GM12878 (cell line): ENCODE measurements at regions of chr5 and their contacts with region 1.

Region 1: DNA sequence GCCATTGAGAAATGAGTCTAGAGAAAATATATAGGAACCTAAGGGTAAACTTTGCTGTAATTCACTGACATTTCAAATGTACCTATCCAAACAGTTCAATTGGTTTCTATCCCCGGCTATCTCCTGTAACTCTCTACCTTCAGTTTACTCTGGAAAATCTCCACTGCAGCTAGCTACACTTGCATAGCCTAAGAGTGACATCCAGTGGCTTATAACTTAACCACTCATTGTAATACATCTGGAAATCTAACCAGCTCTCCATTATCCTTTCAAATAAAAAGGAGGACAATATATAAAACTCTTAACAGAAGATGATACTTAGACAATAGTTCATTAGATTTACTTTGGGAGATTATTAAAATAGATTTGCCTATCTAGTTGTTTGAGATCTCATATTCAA is 35.3 kb upstream of the SPDL1 start:
- DNase-seq: no peak
- ATAC-seq: peak; percentile 47
- H3K4me3 ChIP-seq: no peak overlapping the region
- H3K27ac ChIP-seq: no peak overlapping the region
- H3K4me1 ChIP-seq: no peaks in the 10 kb centered on the region
- H3K27me3 ChIP-seq: peaks cover 1 to 3% of the 10 kb centered on the region in 2 experiments; a peak in 1 of 4 replicates
- CTCF ChIP-seq: peak in 1 of 3 experiments; percentile 46; a peak in 1 of 6 replicates
- EP300 ChIP-seq: no peak
- POLR2A ChIP-seq: no peak
- RAD21 ChIP-seq: peak; percentile 66

Region 2: DNA sequence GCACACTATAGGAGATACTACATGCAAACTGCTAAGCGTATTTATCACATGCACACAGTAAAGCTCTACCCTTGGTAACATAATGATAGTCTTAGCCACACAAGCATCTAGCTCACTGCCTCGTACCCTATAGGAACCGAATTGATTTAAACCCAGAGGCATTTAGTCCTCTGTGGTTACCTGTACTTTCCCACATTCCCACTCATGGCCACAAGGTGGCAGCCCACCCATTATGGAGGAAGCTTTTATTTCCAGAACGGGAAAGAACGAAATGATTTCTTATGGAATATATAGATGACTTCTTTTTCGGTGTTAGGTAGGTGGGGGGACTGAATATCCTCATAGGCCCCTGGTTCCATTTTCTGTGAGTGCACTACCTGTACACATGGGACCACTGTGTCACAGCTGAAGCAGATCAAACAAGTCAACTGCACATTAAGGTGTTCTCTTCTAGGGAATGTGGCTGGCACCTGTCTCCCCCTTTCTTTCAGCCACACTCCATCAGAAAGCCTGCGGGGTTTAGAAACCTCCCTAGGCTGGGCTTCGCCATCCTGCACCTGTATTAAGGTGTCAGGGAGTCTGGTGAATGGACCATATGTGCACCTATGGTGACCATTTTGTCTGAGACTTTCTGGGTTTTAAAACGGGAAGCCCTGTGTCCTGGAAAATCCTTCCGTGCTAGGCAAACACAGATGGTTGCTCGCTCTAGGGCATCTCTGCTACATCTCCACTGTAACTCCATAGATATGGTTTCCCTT is 560.6 kb before region 1 on chr5:
- CTCF ChIA-PET with region 1: interaction called, 16 read pairs
- POLR2A ChIA-PET with region 1: no interaction called
- RAD21 ChIA-PET with region 1: no interaction called
- SMC1A ChIA-PET with region 1: interaction called, 4 read pairs
- in situ Hi-C with region 1: no loop called
- intact Hi-C with region 1: no loop called
- DNase-seq: no peak
- ATAC-seq: peak; percentile 84
- H3K4me3 ChIP-seq: no peak overlapping the region
- H3K27ac ChIP-seq: no peak overlapping the region
- H3K4me1 ChIP-seq: no peaks in the 10 kb centered on the region
- H3K27me3 ChIP-seq: no peaks in the 10 kb centered on the region; a peak in 1 of 4 replicates
- CTCF ChIP-seq: peak; percentile 75 to 92 (median 78)
- EP300 ChIP-seq: no peak
- POLR2A ChIP-seq: no peak
- RAD21 ChIP-seq: peak; percentile 89